ENCODE measurements at regions of chr4 and their contacts with region 1.

Region 1: DNA sequence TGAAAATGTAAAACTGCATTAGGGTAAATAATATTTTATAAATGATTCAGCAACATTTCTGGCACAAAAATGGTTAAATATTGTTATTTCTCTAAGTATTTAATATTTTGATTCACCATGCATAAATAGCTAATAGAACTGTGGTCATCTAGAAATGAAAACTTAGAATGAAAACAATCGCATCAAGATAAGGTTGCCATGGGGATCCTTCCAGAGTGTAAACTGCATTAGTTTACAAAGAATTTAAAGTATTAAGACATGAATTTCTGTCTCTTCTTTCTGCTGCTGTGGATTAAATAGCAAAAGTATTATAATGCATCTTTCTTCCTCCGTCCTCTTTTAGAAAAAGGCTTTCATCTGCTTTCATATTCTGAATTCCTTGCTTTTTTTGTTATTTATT is 1064.6 kb upstream of the SLIT2 start:
- DNase-seq: no peak
- H3K4me3 ChIP-seq: no peak overlapping the region
- H3K27ac ChIP-seq: no peak overlapping the region
- H3K4me1 ChIP-seq: no peaks in the 10 kb centered on the region
- CTCF ChIP-seq: no peak

Region 2: GRCh38 chr4:18404642-18405041 is 782.5 kb before region 1 on chr4:
- CTCF ChIA-PET with region 1: no interaction called
- POLR2A ChIA-PET with region 1: no interaction called
- intact Hi-C with region 1: loop called (anchors 5 kb)
- DNase-seq: no peak
- H3K4me3 ChIP-seq: no peak overlapping the region
- H3K27ac ChIP-seq: no peak overlapping the region
- H3K4me1 ChIP-seq: no peaks in the 10 kb centered on the region
- CTCF ChIP-seq: no peak

Region 3: GRCh38 chr4:18733961-18734360 is 453.1 kb before region 1 on chr4:
- CTCF ChIA-PET with region 1: no interaction called
- POLR2A ChIA-PET with region 1: no interaction called
- intact Hi-C with region 1: no loop called
- DNase-seq: no peak
- H3K4me3 ChIP-seq: no peak overlapping the region
- H3K27ac ChIP-seq: no peak overlapping the region
- H3K4me1 ChIP-seq: peaks cover 8% of the 10 kb centered on the region
- CTCF ChIP-seq: no peak